IMR-90 (cell line): ENCODE measurements at regions of chr4 and their contacts with region 1.

Region 1: GRCh38 chr4:175536852-175537453 is 275.1 kb downstream of the GPM6A start:
- DNase-seq: peak; percentile 62
- ATAC-seq: peak; percentile 46
- H3K4me3 ChIP-seq: no peak overlapping the region
- H3K27ac ChIP-seq: no peak overlapping the region
- H3K4me1 ChIP-seq: no peaks in the 10 kb centered on the region
- H3K27me3 ChIP-seq: no peaks in the 10 kb centered on the region
- CTCF ChIP-seq: peak; percentile 58
- POLR2A ChIP-seq: no peak
- RAD21 ChIP-seq: peak; percentile 77

Region 2: DNA sequence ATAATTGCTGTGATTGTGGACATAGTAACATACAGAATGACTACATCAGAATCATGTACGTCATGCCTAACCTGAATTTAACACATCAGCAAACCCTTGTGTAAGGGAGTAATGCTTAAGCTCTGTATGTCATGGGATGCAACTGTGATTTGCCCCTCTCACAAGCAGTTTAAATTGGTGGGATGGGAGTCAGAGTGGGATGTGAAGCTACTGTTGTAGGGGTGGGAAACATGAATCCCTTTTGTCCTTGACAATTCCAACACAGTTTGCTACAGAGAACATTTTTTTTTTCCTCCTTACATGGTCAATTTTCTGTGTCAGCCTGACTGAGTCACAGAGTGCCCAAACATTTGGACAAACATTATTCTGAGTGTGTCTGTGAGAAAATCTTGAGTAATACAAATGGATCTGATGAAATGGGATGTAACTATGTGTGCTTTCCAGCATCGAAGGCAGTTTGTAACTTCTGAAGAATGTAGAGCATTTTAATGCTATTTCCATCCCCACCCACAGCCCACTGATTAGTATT is 117.7 kb before region 1 on chr4:
- CTCF ChIA-PET with region 1: no interaction called
- POLR2A ChIA-PET with region 1: no interaction called
- dilution Hi-C with region 1: no loop called
- in situ Hi-C with region 1: no loop called
- intact Hi-C with region 1: loop called (anchors 10 kb)
- DNase-seq: peak; percentile 96
- ATAC-seq: peak; percentile 75
- H3K4me3 ChIP-seq: no peak overlapping the region
- H3K27ac ChIP-seq: peak overlapping the region; percentile 100
- H3K4me1 ChIP-seq: peaks cover 7% of the 10 kb centered on the region
- H3K27me3 ChIP-seq: no peaks in the 10 kb centered on the region
- CTCF ChIP-seq: no peak
- POLR2A ChIP-seq: no peak
- RAD21 ChIP-seq: no peak

Region 3: DNA sequence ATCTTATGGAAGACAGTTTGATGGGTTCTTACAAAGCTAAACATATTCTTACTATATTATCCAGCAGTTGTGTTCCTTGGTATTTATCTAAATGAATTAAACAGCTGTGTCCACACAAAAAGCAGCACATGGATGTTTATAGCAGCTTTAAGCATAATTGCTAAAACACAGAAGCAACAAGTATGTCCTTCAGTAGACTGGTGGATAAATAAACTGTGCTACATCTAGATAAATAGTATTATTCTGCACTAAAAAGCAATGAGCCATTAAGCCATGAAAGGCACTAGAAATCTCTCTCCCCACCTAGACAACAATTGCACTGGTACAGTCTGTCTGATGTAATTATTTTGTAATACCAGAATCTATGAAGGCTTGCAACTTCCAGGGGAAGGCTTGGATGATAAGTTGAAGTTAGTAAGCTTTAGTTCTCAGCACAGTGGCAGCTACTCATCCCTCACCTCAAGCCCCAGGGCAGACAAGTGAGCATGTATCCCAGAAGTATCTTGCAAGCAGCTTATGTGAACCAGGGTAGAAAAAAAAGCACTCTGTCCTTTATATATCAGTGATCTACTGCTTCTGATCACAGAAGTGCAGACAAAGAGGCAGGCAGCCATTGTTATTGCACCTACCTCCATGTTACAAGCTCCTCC is 565.6 kb after region 1 on chr4:
- CTCF ChIA-PET with region 1: no interaction called
- POLR2A ChIA-PET with region 1: no interaction called
- dilution Hi-C with region 1: no loop called
- in situ Hi-C with region 1: no loop called
- intact Hi-C with region 1: no loop called
- DNase-seq: no peak
- ATAC-seq: no peak
- H3K4me3 ChIP-seq: no peak overlapping the region
- H3K27ac ChIP-seq: no peak overlapping the region
- H3K4me1 ChIP-seq: no peaks in the 10 kb centered on the region
- H3K27me3 ChIP-seq: no peaks in the 10 kb centered on the region
- CTCF ChIP-seq: no peak
- POLR2A ChIP-seq: no peak
- RAD21 ChIP-seq: no peak